ENCODE measurements at regions of chr20 and their contacts with region 1.

Region 1: GRCh38 chr20:16209951-16210361 is 363.3 kb downstream of the KIF16B start:
- DNase-seq: no peak
- ATAC-seq: no peak; the same call in 1 of the 2 replicates
- H3K4me3 ChIP-seq: no peak overlapping the region
- H3K27ac ChIP-seq: no peak overlapping the region
- H3K4me1 ChIP-seq: no peaks in the 10 kb centered on the region
- H3K27me3 ChIP-seq: no peaks in the 10 kb centered on the region
- CTCF ChIP-seq: no peak
- POLR2A ChIP-seq: no peak
- RAD21 ChIP-seq: no peak

Region 2: GRCh38 chr20:16125816-16126215 is 84.1 kb before region 1 on chr20:
- CTCF ChIA-PET with region 1: no interaction called
- POLR2A ChIA-PET with region 1: no interaction called
- dilution Hi-C with region 1: no loop called
- in situ Hi-C with region 1: no loop called
- intact Hi-C with region 1: no loop called
- DNase-seq: no peak
- ATAC-seq: no peak
- H3K4me3 ChIP-seq: no peak overlapping the region
- H3K27ac ChIP-seq: no peak overlapping the region
- H3K4me1 ChIP-seq: no peaks in the 10 kb centered on the region
- H3K27me3 ChIP-seq: no peaks in the 10 kb centered on the region
- CTCF ChIP-seq: no peak
- POLR2A ChIP-seq: no peak
- RAD21 ChIP-seq: no peak

Region 3: GRCh38 chr20:16392346-16392745 is 182.4 kb after region 1 on chr20:
- CTCF ChIA-PET with region 1: no interaction called
- POLR2A ChIA-PET with region 1: no interaction called
- dilution Hi-C with region 1: no loop called
- in situ Hi-C with region 1: no loop called
- intact Hi-C with region 1: no loop called
- DNase-seq: no peak
- ATAC-seq: no peak
- H3K4me3 ChIP-seq: no peak overlapping the region
- H3K27ac ChIP-seq: no peak overlapping the region
- H3K4me1 ChIP-seq: no peaks in the 10 kb centered on the region
- H3K27me3 ChIP-seq: no peaks in the 10 kb centered on the region
- CTCF ChIP-seq: no peak
- POLR2A ChIP-seq: no peak
- RAD21 ChIP-seq: no peak

Region 4: GRCh38 chr20:16415071-16416053 is 205.4 kb after region 1 on chr20:
- CTCF ChIA-PET with region 1: no interaction called
- POLR2A ChIA-PET with region 1: no interaction called
- dilution Hi-C with region 1: no loop called
- in situ Hi-C with region 1: no loop called
- intact Hi-C with region 1: loop called (anchors 10 kb)
- DNase-seq: peak; percentile 54
- ATAC-seq: peak; percentile 74
- H3K4me3 ChIP-seq: no peak overlapping the region
- H3K27ac ChIP-seq: no peak overlapping the region
- H3K4me1 ChIP-seq: no peaks in the 10 kb centered on the region
- H3K27me3 ChIP-seq: no peaks in the 10 kb centered on the region
- CTCF ChIP-seq: no peak
- POLR2A ChIP-seq: no peak
- RAD21 ChIP-seq: no peak

Region 5: GRCh38 chr20:16539280-16540021 is 329.5 kb after region 1 on chr20:
- CTCF ChIA-PET with region 1: no interaction called
- POLR2A ChIA-PET with region 1: no interaction called
- dilution Hi-C with region 1: no loop called
- in situ Hi-C with region 1: no loop called
- intact Hi-C with region 1: no loop called
- DNase-seq: peak; percentile 9
- ATAC-seq: no peak
- H3K4me3 ChIP-seq: no peak overlapping the region
- H3K27ac ChIP-seq: no peak overlapping the region
- H3K4me1 ChIP-seq: peaks cover 6% of the 10 kb centered on the region; the same call in 1 of the 2 replicates
- H3K27me3 ChIP-seq: no peaks in the 10 kb centered on the region
- CTCF ChIP-seq: no peak
- POLR2A ChIP-seq: no peak
- RAD21 ChIP-seq: no peak